GM18951 (cell line): ENCODE measurements at regions of chr3 and their contacts with region 1.

Region 1: GRCh38 chr3:123971406-123971805 is 10.4 kb upstream of the CCDC14 start:
- POLR2A ChIP-seq: no peak

Region 2: DNA sequence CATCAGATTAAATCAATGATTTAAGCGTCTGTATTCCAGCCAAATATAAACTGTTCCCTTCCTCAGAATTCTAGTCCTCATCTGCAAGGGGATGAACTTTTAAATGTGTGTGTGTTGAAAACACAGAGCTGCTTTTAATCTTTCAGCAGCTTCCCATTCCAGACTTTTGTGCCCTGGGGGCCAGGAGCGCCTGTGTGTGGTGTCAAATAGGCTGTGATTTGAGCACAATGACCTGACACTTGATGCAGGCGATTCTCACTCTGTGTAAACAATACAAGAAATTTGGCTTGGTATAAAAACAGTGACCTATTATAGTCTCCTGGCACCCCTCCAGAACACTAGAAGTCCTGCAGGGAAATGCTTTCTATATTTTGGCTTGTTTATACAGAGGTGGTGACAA is 295.1 kb after region 1 on chr3:
- in situ Hi-C with region 1: no loop called
- POLR2A ChIP-seq: no peak

Region 3: DNA sequence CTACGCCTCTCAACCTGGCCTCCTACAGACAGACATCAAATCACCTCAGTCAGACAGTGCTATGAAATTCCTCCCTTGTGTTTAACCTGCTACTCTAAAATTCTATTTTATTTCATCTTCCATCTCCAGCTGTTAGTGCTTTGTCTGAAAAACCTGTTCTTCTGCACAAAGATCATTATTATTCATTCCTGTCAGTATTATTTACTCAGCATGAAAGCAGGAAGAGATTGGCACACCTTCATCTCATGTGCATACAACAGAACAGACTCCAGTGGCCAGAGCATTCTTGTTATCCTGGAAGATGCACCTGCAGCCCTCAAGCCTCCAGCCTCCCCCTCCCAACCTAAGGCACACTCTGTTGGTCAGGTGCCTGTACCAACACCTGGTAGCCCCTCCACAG is 1995.7 kb after region 1 on chr3:
- in situ Hi-C with region 1: loop called (anchors 10 kb)
- POLR2A ChIP-seq: no peak